Left cardiac atrium (tissue), 4 donors: ENCODE measurements at regions of chr20 and their contacts with region 1.

Region 1: DNA sequence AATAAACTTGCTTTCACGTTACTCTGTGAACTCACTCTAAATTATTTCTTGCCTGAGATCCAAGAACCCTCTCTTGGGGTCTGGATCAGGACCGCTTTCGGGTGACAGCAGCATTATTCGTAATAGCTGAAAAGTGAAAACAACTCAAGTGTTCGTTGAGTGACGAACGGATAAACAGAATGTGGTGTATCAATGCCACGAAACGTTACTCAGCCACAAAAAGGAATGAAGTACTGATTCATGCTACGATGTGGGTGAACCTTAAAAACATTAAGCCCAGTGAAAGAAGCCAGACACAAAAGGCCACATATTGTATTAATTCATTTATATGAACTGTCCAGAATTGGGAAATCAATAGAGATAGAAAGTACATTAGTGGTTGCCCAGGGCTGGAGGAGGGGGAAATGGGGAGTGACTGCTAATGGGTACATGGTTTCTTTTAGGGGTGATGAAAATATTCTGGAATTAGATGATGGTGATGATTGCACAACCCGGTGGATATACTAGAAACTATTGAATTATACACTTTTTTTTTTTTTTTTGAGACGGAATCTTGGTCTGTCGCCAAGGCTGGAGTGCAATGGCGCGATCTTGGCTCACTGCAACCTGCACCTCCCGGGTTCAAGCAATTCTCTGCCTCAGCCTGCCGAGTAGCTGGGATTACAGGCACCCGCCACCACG is 8.4 kb downstream of the PTGIS start:
- DNase-seq: no peak
- ATAC-seq: peak; percentile 29 to 51

Region 2: GRCh38 chr20:49151436-49151835 is 408.1 kb before region 1 on chr20:
- intact Hi-C with region 1: no loop called
- DNase-seq: no peak
- ATAC-seq: no peak

Region 3: GRCh38 chr20:49768204-49769047 is 208.9 kb after region 1 on chr20:
- intact Hi-C with region 1: no loop called
- DNase-seq: peak; percentile 66
- ATAC-seq: peak; percentile 20 to 61

Region 4: GRCh38 chr20:49846206-49846807 is 286.8 kb after region 1 on chr20:
- intact Hi-C with region 1: loop called in 1 of 2 experiments (anchors 5 kb)
- DNase-seq: no peak
- ATAC-seq: peak; percentile 76 to 79